Left cardiac atrium (tissue), 4 donors: ENCODE measurements at regions of chr18 and their contacts with region 1.

Region 1: GRCh38 chr18:78984941-78985784 is 5.5 kb downstream of the SALL3 start:
- DNase-seq: no peak
- ATAC-seq: peak in 1 of 2 donors; percentile 33

Region 2: GRCh38 chr18:77899972-77900754 is 1085.0 kb before region 1 on chr18:
- intact Hi-C with region 1: loop called in 1 of 2 experiments (anchors 10 kb)
- DNase-seq: peak; percentile 40
- ATAC-seq: peak; percentile 91 to 92

Region 3: DNA sequence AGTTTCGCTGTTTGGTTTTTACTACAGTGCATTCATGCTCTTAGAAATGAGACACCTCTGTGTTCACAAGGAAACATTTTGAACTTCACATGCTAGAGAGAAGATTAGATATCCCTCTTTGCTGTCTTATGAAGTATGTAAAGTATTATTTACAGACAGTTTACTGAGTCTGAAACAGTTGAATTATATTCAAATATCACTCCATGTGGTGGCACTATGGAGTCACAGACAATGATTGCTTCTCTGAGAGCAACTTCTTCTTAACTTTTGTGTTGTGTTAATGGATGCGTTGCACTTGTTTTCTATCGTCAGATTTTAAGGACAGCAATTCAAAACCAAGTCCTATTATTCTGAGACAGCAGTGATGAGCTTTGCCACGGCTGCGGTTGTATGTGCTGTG is 911.9 kb before region 1 on chr18:
- intact Hi-C with region 1: loop called in 1 of 2 experiments (anchors 10 kb)
- DNase-seq: no peak
- ATAC-seq: no peak

Region 4: GRCh38 chr18:79169958-79170555 is 184.9 kb after region 1 on chr18:
- intact Hi-C with region 1: no loop called
- DNase-seq: no peak
- ATAC-seq: peak in 1 of 2 donors; percentile 72